ENCODE measurements at regions of chr12 and their contacts with region 1.

Region 1: GRCh38 chr12:53344824-53345485 is 8.8 kb upstream of the SP7 start:
- DNase-seq: peak; percentile 93
- H3K4me3 ChIP-seq: peak overlapping the region; percentile 53 to 72
- H3K27ac ChIP-seq: peak overlapping the region; percentile 71 to 74
- H3K4me1 ChIP-seq: peaks cover 0 to 14% of the 10 kb centered on the region in 2 experiments; a peak in 2 of 4 replicates
- H3K27me3 ChIP-seq: no peaks in the 10 kb centered on the region
- CTCF ChIP-seq: peak; percentile 83
- EP300 ChIP-seq: peak in 1 of 2 experiments; percentile 30; a peak in 1 of 4 replicates
- RAD21 ChIP-seq: peak; percentile 73

Region 2: GRCh38 chr12:53267306-53267998 is 77.5 kb before region 1 on chr12:
- CTCF ChIA-PET with region 1: no interaction called
- POLR2A ChIA-PET with region 1: no interaction called
- DNase-seq: no peak
- H3K4me3 ChIP-seq: peak overlapping the region; percentile 76
- H3K27ac ChIP-seq: no peak overlapping the region
- H3K4me1 ChIP-seq: peaks cover 5 to 21% of the 10 kb centered on the region in 2 experiments; a peak in 2 of 4 replicates
- H3K27me3 ChIP-seq: no peaks in the 10 kb centered on the region
- CTCF ChIP-seq: no peak
- EP300 ChIP-seq: no peak
- RAD21 ChIP-seq: no peak

Region 3: GRCh38 chr12:53295070-53295890 is 49.7 kb before region 1 on chr12 and contains the start of gene PFDN5:
- CTCF ChIA-PET with region 1: interaction called, 17 read pairs
- POLR2A ChIA-PET with region 1: interaction called, 3 read pairs
- DNase-seq: peak; percentile 88
- H3K4me3 ChIP-seq: peak within 1 kb of the TSS; percentile 83 to 91
- H3K27ac ChIP-seq: peak within 1 kb of the TSS; percentile 88 to 96
- H3K4me1 ChIP-seq: peaks cover 11 to 17% of the 10 kb centered on the region in 2 experiments
- H3K27me3 ChIP-seq: no peaks in the 10 kb centered on the region
- CTCF ChIP-seq: no peak
- EP300 ChIP-seq: no peak; a peak in 1 of 4 replicates
- RAD21 ChIP-seq: 0 out of 2 replicates have a peak, but pooled peaks have one; percentile 1
- polyA plus RNA-seq, gene PFDN5: 1,198 and 1,880 TPM in 2 replicates

Region 4: DNA sequence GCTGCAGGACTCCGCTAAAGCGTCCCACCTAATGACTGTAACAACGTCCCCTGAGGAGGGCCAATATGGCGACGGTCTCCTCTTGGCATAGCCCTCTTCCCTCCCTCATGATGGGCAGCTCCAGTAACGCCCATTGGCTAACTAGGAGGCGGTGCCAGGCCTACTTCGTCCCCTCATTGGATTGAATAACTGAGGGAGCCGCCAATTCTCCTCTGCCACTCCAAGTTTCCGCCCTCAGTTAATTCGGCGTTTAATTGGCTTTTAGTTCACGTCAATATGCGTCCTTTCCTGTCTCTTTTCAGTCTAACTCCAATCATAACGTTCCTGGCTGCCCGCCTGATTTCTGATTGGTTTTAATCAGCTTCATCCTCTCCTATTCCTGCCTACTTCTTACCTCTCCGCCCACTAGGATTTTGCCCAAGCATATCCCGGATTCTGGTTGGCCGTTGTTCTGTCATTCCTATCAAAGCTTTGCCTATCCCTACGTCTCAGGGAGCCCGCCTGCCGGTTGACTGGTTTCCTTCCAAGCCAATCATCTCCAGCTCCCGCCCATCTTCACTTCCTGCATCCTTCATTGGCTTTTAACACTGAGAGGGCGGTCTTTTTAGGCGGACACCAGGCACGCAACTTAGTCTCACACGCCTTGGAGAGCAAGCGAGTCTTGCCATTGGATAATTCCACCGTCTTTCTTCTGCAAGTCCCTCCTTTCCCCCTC is 34.6 kb after region 1 on chr12:
- CTCF ChIA-PET with region 1: interaction called, 35 read pairs
- POLR2A ChIA-PET with region 1: interaction called, 19 read pairs
- DNase-seq: peak; percentile 91
- H3K4me3 ChIP-seq: peak overlapping the region; percentile 52 to 59
- H3K27ac ChIP-seq: peak overlapping the region; percentile 89 to 96
- H3K4me1 ChIP-seq: peaks cover 29 to 32% of the 10 kb centered on the region in 2 experiments
- H3K27me3 ChIP-seq: no peaks in the 10 kb centered on the region
- CTCF ChIP-seq: no peak
- EP300 ChIP-seq: no peak
- RAD21 ChIP-seq: no peak

Region 5: DNA sequence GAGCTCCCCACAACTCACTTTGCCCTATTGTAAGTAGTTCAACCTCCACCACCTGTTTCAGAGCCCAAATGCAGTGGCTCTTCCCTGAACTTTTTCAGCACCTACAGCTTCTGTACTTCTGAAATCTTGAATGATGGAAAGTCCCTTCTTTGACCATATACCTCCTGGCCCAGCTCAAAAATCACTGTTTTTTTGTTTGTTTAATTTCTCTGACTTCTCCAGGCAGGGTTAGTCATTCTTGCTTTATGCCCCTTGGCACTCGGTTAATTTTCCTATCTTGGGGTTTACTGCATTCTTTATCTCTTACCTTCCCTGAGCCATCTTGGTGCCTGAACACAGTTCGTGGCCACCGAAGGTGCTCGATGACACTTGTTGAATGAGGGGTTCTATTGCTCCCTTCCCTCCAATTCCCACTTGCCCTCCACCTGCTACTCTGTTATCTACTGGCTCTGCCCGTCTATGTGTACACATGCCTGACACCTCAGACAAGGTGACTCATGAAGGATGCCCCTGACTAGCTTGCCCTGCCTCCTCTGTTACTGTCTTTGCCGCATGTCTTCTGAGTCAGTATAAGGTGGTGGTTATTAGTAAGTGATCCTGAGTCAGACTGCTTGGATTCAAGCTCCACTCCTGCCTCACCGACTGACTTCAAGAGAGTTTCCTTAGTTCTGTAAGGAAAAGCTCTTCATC is 83.1 kb after region 1 on chr12:
- CTCF ChIA-PET with region 1: interaction called, 83 read pairs
- POLR2A ChIA-PET with region 1: interaction called, 4 read pairs
- DNase-seq: no peak
- H3K4me3 ChIP-seq: no peak overlapping the region
- H3K27ac ChIP-seq: no peak overlapping the region
- H3K4me1 ChIP-seq: peaks cover 8 to 11% of the 10 kb centered on the region in 2 experiments; a peak in 3 of 4 replicates
- H3K27me3 ChIP-seq: no peaks in the 10 kb centered on the region
- CTCF ChIP-seq: no peak
- EP300 ChIP-seq: no peak
- RAD21 ChIP-seq: no peak

Region 6: DNA sequence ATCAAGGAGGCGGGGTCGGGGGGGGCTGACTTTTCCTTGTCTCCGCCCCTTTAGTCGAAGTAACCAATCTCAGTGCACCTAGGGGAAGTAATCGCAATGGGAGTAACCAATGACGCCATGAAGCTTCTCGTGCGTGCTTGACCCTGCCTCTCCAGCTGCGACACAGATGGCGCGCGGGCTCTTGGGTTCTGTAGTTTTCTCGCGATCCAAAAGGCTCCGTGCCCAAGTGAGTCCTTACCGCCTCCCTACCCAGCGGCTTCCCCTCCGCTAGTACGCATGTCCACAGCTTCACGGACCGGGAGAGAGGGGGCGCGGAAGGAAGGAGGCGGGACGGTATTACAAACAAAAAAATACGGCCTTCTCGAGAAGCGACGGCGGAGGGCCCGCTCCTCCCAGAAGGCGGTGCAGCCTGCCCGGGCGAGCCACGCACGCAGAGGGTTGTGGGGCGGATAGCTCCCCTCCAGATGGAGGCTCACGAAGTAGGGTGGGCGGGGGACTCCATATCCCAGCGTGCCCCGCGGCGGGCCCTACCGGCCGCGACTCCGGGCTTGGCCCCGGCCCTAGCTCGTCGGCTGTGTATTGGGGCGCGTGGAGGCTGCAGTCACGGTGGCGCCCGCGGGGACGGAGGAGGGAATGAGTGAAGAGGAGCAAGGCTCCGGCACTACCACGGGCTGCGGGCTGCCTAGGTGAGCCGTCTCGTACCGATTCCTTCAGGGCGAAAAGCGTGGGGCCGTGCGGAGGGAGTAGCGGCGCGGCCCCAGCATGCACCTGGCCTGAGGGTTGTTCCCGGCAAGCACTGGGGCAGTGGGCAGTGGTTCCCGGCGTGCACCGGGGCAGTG is 156.0 kb after region 1 on chr12 and contains the start of gene TARBP2:
- CTCF ChIA-PET with region 1: interaction called, 4 read pairs
- POLR2A ChIA-PET with region 1: interaction called, 14 read pairs
- DNase-seq: peak; percentile 92
- H3K4me3 ChIP-seq: peak within 1 kb of the TSS; percentile 52 to 75
- H3K27ac ChIP-seq: peak within 1 kb of the TSS; percentile 94 to 100
- H3K4me1 ChIP-seq: peaks cover 33 to 37% of the 10 kb centered on the region in 2 experiments
- H3K27me3 ChIP-seq: no peaks in the 10 kb centered on the region
- CTCF ChIP-seq: no peak
- EP300 ChIP-seq: no peak
- RAD21 ChIP-seq: no peak
- polyA plus RNA-seq, gene TARBP2: 57.8 and 69.8 TPM in 2 replicates

Measured in SK-N-SH (cell line).